B cell (primary cell): ENCODE measurements at regions of chrX and their contacts with region 1.

Region 1: DNA sequence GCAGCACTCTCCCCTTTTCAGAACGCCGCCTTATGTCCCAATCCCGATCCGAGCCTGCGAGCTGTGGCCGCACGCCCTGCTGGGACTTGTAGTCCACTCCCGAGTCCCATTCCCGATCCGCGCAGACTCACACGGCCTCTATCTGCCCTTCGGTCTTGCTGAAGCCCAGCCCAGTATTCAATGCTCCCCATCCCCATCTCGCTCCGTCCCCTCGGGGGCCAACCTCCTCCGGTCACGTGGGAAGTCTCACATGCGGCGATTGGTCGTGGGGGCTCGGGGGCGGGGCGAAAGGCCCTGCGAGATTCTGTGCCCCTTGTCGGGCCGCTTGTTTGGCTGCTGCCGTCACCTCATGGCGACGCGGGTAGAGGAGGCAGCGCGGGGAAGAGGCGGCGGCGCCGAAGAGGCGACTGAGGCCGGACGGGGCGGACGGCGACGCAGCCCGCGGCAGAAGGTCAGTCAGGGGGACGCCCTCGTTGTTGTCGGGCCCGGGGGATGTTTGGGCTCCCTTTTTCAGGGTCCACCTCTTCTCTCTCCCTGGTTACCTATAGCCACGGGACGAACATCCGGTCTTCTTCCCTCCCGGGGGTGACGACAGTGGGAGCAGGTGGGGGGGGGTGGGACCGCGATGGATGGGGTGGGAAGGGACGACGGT is at the start of gene TXLNG:
- DNase-seq: peak; percentile 95
- ATAC-seq: peak; percentile 94
- H3K4me3 ChIP-seq: peak within 1 kb of the TSS; percentile 68 to 89 (median 81)
- H3K4me3 Mint-ChIP-seq: peak within 1 kb of the TSS; percentile 96
- H3K27ac ChIP-seq: peak within 1 kb of the TSS; percentile 89 to 95
- H3K27ac Mint-ChIP-seq: peak within 1 kb of the TSS; percentile 95
- H3K4me1 ChIP-seq: peaks cover 8 to 11% of the 10 kb centered on the region in 2 donors
- H3K4me1 Mint-ChIP-seq: peaks cover 17% of the 10 kb centered on the region
- H3K27me3 ChIP-seq: no peaks in the 10 kb centered on the region
- H3K27me3 Mint-ChIP-seq: no peaks in the 10 kb centered on the region
- CTCF ChIP-seq: no peak
- total RNA-seq, gene TXLNG: 12.5 and 13.5 TPM in 2 replicates

Region 2: GRCh38 chrX:15737960-15738902 is 1048.0 kb before region 1 on chrX and contains the start of gene CA5B:
- CTCF ChIA-PET with region 1: no interaction called
- POLR2A ChIA-PET with region 1: no interaction called
- intact Hi-C with region 1: no loop called
- DNase-seq: peak; percentile 95
- ATAC-seq: peak; percentile 94
- H3K4me3 ChIP-seq: peak within 1 kb of the TSS; percentile 17 to 84 (median 72)
- H3K4me3 Mint-ChIP-seq: peak within 1 kb of the TSS; percentile 95
- H3K27ac ChIP-seq: peak within 1 kb of the TSS; percentile 42 to 58
- H3K27ac Mint-ChIP-seq: peak within 1 kb of the TSS; percentile 91
- H3K4me1 ChIP-seq: peaks cover 18 to 19% of the 10 kb centered on the region in 2 donors
- H3K4me1 Mint-ChIP-seq: peaks cover 35% of the 10 kb centered on the region
- H3K27me3 ChIP-seq: no peaks in the 10 kb centered on the region
- H3K27me3 Mint-ChIP-seq: no peaks in the 10 kb centered on the region
- CTCF ChIP-seq: no peak
- total RNA-seq, gene CA5B: 17.2 and 17.7 TPM in 2 replicates

Region 3: DNA sequence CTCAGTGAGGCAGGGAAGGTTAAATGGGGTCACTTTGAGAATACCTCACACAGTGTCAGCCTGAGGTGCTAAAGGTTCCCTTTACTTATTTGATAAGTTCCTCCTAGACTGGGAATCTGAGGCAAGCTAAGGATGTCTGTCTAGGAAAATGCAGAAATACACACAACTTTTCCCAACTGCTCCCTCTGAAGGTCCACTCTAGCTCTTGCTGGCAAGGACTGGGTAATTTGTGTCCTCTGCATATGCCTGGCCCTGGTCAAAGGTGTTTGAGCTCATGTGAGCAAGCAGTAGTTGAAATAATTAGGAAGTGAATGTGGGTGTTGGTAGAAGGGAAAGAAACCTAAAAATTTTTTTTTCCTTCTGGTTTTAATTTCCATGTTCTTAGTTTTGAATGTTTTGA is 21.3 kb after region 1 on chrX:
- CTCF ChIA-PET with region 1: no interaction called
- POLR2A ChIA-PET with region 1: no interaction called
- intact Hi-C with region 1: no loop called
- DNase-seq: no peak
- ATAC-seq: no peak
- H3K4me3 ChIP-seq: no peak overlapping the region
- H3K4me3 Mint-ChIP-seq: no peak overlapping the region
- H3K27ac ChIP-seq: no peak overlapping the region
- H3K27ac Mint-ChIP-seq: no peak overlapping the region
- H3K4me1 ChIP-seq: peaks cover 4 to 6% of the 10 kb centered on the region in 2 donors
- H3K4me1 Mint-ChIP-seq: peaks cover 27% of the 10 kb centered on the region
- H3K27me3 ChIP-seq: no peaks in the 10 kb centered on the region
- H3K27me3 Mint-ChIP-seq: no peaks in the 10 kb centered on the region
- CTCF ChIP-seq: no peak

Region 4: DNA sequence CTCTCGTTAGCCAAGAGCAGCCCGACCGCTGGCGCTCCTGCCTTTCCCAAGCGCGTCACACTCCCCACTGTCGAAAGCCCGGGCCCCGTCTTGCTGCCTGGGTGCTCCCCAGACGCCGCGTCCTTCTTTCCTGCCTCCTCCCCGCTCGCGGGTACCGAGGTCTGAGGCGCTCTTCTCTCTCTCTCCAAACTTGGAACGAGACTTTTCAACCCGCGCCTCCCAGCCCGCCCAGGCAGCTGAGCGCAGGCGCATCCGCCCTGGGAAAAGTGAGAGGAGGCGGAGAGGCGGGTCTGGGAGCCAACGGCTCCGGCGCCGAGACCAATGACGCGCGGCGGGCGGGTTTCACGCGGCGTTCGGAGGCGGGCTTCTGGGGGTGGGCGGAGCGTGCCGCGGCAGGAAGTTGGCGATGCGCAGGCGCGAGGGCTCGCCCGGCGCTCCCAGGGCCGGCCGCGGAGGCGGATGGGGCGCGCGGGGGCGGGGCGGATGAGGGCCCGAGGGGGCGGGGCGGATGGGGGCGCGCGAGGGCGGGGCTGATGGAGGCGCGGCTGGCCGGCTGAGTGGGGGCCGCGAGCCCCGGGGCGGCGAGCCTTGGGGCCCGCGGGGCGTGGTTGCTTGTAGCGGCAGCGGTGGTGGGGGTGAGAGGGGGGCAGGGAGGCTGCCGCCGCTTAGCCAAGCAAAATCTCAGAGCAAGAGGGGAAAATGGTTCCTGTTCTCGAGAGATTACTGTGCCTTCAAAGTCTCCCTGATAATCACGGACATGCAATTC is 84.0 kb after region 1 on chrX and contains the start of gene RBBP7:
- CTCF ChIA-PET with region 1: no interaction called
- POLR2A ChIA-PET with region 1: no interaction called
- intact Hi-C with region 1: loop called (anchors 1 kb)
- DNase-seq: peak; percentile 92
- ATAC-seq: peak; percentile 80
- H3K4me3 ChIP-seq: peak within 1 kb of the TSS; percentile 41 to 94 (median 79)
- H3K4me3 Mint-ChIP-seq: peak within 1 kb of the TSS; percentile 93
- H3K27ac ChIP-seq: peak within 1 kb of the TSS; percentile 96 to 99
- H3K27ac Mint-ChIP-seq: peak within 1 kb of the TSS; percentile 98
- H3K4me1 ChIP-seq: peaks cover 26 to 33% of the 10 kb centered on the region in 2 donors
- H3K4me1 Mint-ChIP-seq: peaks cover 43% of the 10 kb centered on the region
- H3K27me3 ChIP-seq: peaks cover 0 to 10% (median 0%) of the 10 kb centered on the region in 4 experiments
- H3K27me3 Mint-ChIP-seq: no peaks in the 10 kb centered on the region
- CTCF ChIP-seq: no peak
- total RNA-seq, gene RBBP7: 106 and 110 TPM in 2 replicates

Region 5: GRCh38 chrX:16946361-16946964 is 160.2 kb after region 1 on chrX and contains the start of gene REPS2:
- CTCF ChIA-PET with region 1: no interaction called
- POLR2A ChIA-PET with region 1: no interaction called
- intact Hi-C with region 1: loop called (anchors 2 kb)
- DNase-seq: peak; percentile 88
- ATAC-seq: peak; percentile 94
- H3K4me3 ChIP-seq: peak within 1 kb of the TSS in 4 of 5 experiments; percentile 51 to 64 (median 62)
- H3K4me3 Mint-ChIP-seq: peak within 1 kb of the TSS; percentile 87
- H3K27ac ChIP-seq: peak within 1 kb of the TSS in 1 of 2 donors; percentile 23
- H3K27ac Mint-ChIP-seq: peak within 1 kb of the TSS; percentile 50
- H3K4me1 ChIP-seq: peaks cover 8 to 17% of the 10 kb centered on the region in 2 donors
- H3K4me1 Mint-ChIP-seq: peaks cover 9% of the 10 kb centered on the region
- H3K27me3 ChIP-seq: no peaks in the 10 kb centered on the region
- H3K27me3 Mint-ChIP-seq: no peaks in the 10 kb centered on the region
- CTCF ChIP-seq: no peak
- total RNA-seq, gene REPS2: 4.9 and 9.4 TPM in 2 replicates